Activated CD4-positive, alpha-beta T cell treated with anti-CD3 and anti-CD28 coated beads for 36 hours (primary cell): ENCODE measurements at regions of chr7 and their contacts with region 1.

Region 1: GRCh38 chr7:145016068-145016467 is 180.2 kb upstream of the TPK1 start:
- DNase-seq: no peak
- ATAC-seq: no peak
- H3K4me3 Mint-ChIP-seq: no peak overlapping the region
- H3K27ac Mint-ChIP-seq: no peak overlapping the region
- H3K4me1 Mint-ChIP-seq: no peaks in the 10 kb centered on the region
- H3K27me3 Mint-ChIP-seq: no peaks in the 10 kb centered on the region

Region 2: GRCh38 chr7:144776447-144776846 is 239.6 kb before region 1 on chr7:
- CTCF ChIA-PET with region 1: no interaction called
- POLR2A ChIA-PET with region 1: interaction called, 10 read pairs
- intact Hi-C with region 1: no loop called
- DNase-seq: no peak
- ATAC-seq: no peak
- H3K4me3 Mint-ChIP-seq: no peak overlapping the region
- H3K27ac Mint-ChIP-seq: no peak overlapping the region
- H3K4me1 Mint-ChIP-seq: peaks cover 32% of the 10 kb centered on the region
- H3K27me3 Mint-ChIP-seq: no peaks in the 10 kb centered on the region

Region 3: GRCh38 chr7:144969787-144970186 is 46.3 kb before region 1 on chr7:
- CTCF ChIA-PET with region 1: no interaction called
- POLR2A ChIA-PET with region 1: no interaction called
- intact Hi-C with region 1: no loop called
- DNase-seq: no peak
- ATAC-seq: no peak
- H3K4me3 Mint-ChIP-seq: no peak overlapping the region
- H3K27ac Mint-ChIP-seq: no peak overlapping the region
- H3K4me1 Mint-ChIP-seq: no peaks in the 10 kb centered on the region
- H3K27me3 Mint-ChIP-seq: peaks cover 11% of the 10 kb centered on the region

Region 4: GRCh38 chr7:145106001-145106400 is 89.9 kb after region 1 on chr7:
- CTCF ChIA-PET with region 1: no interaction called
- POLR2A ChIA-PET with region 1: no interaction called
- intact Hi-C with region 1: no loop called
- DNase-seq: no peak
- ATAC-seq: no peak
- H3K4me3 Mint-ChIP-seq: no peak overlapping the region
- H3K27ac Mint-ChIP-seq: no peak overlapping the region
- H3K4me1 Mint-ChIP-seq: no peaks in the 10 kb centered on the region
- H3K27me3 Mint-ChIP-seq: peaks cover 2% of the 10 kb centered on the region

Region 5: DNA sequence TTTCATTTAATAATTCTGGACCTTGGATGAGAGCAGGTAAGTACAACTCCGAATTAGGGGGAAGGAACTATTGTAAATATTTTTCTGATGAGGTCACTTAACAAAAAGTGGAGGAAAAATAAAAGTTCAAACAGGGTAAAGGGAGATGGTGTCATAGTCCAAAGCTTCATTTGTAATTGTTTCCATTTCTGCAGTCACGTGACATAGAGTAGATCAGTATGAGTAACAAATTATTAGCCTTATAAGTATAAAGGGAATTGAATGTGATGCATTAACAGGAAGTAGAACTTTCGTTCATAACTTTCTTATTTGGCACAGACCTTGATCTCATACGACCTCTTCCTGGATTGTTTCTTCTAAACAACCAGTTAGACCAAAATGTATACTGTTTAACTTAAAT is 167.0 kb after region 1 on chr7:
- CTCF ChIA-PET with region 1: no interaction called
- POLR2A ChIA-PET with region 1: no interaction called
- intact Hi-C with region 1: no loop called
- DNase-seq: no peak
- ATAC-seq: no peak
- H3K4me3 Mint-ChIP-seq: no peak overlapping the region
- H3K27ac Mint-ChIP-seq: no peak overlapping the region
- H3K4me1 Mint-ChIP-seq: no peaks in the 10 kb centered on the region
- H3K27me3 Mint-ChIP-seq: no peaks in the 10 kb centered on the region